ENCODE measurements at regions of chr6 and their contacts with region 1.

Region 1: GRCh38 chr6:79672631-79673111 is 41.5 kb downstream of the SH3BGRL2 start:
- DNase-seq: peak in 1 of 2 experiments; percentile 72
- H3K4me3 ChIP-seq: no peak overlapping the region
- H3K4me3 Mint-ChIP-seq: peak overlapping the region; percentile 79
- H3K27ac Mint-ChIP-seq: peak overlapping the region; percentile 83
- H3K4me1 ChIP-seq: peaks cover 76% of the 10 kb centered on the region
- H3K4me1 Mint-ChIP-seq: peaks cover 71% of the 10 kb centered on the region
- H3K27me3 ChIP-seq: no peaks in the 10 kb centered on the region
- H3K27me3 Mint-ChIP-seq: no peaks in the 10 kb centered on the region
- CTCF ChIP-seq: peak; percentile 41 to 75

Region 2: DNA sequence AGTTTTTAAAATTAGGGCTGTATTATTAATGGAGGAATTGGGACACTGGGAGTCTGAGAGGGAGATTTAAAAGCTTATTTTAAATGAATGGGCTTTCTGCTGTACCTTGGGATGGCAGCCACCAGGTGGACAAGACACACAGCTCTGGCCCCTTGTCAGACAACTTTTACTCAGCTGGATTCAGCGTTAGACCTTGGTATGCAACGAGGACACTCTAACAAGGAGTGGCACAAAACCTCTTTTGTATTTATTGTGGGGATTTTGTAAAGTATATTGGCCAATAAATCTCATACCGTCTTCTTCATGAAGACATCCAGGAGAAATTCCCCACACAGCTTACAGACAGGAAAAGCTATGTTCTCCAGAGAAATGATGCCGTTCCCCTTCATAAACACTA is 241.1 kb before region 1 on chr6:
- CTCF ChIA-PET with region 1: no interaction called
- POLR2A ChIA-PET with region 1: no interaction called
- intact Hi-C with region 1: loop called (anchors 1 kb)
- DNase-seq: peak; percentile 61 to 69
- H3K4me3 ChIP-seq: no peak overlapping the region
- H3K4me3 Mint-ChIP-seq: peak overlapping the region; percentile 10
- H3K27ac Mint-ChIP-seq: peak overlapping the region; percentile 41
- H3K4me1 ChIP-seq: peaks cover 37% of the 10 kb centered on the region
- H3K4me1 Mint-ChIP-seq: peaks cover 24% of the 10 kb centered on the region
- H3K27me3 ChIP-seq: no peaks in the 10 kb centered on the region
- H3K27me3 Mint-ChIP-seq: no peaks in the 10 kb centered on the region
- CTCF ChIP-seq: peak; percentile 62 to 67

Region 3: DNA sequence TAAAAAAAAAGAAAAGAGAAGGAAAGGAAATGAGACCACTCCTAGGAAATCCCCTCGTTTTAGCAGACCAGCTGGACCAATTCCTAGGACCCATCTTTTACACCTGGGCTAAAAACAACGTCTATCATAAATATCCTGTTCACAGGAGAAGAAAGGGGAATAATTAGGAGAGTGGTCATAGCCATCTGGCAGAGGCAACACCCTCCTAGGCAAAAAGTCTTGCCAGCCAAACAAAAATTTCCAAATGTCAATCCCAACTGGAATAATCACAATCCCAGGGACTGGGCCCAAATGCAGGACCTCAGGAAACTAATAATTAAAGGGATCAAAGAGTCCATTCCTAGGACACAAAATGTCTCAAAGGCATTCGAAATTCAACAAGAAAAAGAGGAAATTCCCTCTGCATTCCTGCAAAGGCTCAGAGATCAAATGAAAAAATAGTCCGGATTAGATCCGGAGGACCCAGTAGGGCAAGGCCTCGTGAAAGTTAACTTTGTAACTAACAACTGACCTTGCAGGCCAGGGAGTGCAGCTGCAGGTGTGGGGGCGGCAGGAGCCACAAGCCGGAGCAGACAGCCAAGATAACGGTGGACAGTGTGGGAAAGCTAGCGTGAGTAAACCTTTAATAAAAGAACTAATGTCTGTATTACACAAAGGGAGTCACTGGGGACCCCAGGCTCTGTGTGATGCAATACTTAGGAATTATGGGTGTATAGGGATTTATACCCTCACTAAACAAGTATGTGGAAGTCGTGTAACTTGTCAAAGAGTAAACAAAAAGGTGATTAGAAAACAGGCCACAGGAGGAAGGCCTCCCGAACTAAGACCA is 147.2 kb before region 1 on chr6:
- CTCF ChIA-PET with region 1: no interaction called
- POLR2A ChIA-PET with region 1: no interaction called
- intact Hi-C with region 1: loop called (anchors 1 kb)
- DNase-seq: peak; percentile 87 to 93
- H3K4me3 ChIP-seq: peak overlapping the region; percentile 17
- H3K4me3 Mint-ChIP-seq: peak overlapping the region; percentile 68
- H3K27ac Mint-ChIP-seq: peak overlapping the region; percentile 84
- H3K4me1 ChIP-seq: peaks cover 52% of the 10 kb centered on the region
- H3K4me1 Mint-ChIP-seq: peaks cover 32% of the 10 kb centered on the region
- H3K27me3 ChIP-seq: no peaks in the 10 kb centered on the region
- H3K27me3 Mint-ChIP-seq: no peaks in the 10 kb centered on the region
- CTCF ChIP-seq: no peak

Region 4: DNA sequence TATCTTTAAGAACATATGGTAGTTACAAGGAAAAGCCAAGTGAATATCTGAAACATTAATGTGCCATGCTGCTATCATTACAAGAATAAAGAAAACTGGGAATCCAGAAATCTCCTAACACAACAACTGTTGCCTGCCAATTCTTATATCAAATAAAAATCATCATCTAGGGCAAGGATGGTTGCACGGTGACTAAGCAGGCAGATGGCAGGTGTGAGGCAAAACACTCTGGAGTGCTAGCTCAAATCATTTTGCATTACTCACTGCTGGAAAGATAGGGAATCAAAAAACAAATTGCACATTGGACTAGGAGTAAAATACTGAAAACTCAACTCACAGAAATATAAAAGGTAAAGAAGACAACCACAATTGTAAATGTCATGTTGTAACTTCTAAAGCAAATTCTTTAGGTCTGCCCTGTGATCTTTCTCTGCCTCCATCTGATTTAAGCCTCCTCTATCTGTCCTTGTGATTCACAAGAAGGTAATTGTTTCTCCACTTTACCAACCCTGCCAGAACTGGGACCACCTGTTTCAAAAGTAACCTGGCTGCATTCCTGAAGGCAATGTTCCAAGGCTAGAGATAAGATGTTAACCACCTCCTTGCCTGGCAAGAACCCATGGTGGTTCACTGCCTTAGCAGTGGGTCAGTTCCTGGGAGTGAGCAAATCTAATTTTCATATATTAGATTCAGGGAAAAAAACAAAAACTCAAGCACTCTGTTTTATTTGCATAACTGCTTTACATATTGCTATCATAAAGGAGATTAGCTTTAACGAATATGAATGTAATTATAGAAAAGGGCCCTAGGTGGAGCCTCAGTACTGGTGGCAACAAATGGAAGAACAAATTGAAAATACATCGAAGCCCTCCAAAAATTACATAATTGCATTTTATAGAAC is 102.3 kb before region 1 on chr6:
- CTCF ChIA-PET with region 1: interaction called, 9 read pairs
- POLR2A ChIA-PET with region 1: no interaction called
- intact Hi-C with region 1: loop called (anchors 1 kb)
- DNase-seq: peak; percentile 93 to 94
- H3K4me3 ChIP-seq: peak overlapping the region; percentile 16; the same call in 1 of the 2 replicates
- H3K4me3 Mint-ChIP-seq: peak overlapping the region; percentile 46
- H3K27ac Mint-ChIP-seq: peak overlapping the region; percentile 88
- H3K4me1 ChIP-seq: peaks cover 69% of the 10 kb centered on the region
- H3K4me1 Mint-ChIP-seq: peaks cover 42% of the 10 kb centered on the region
- H3K27me3 ChIP-seq: no peaks in the 10 kb centered on the region
- H3K27me3 Mint-ChIP-seq: no peaks in the 10 kb centered on the region
- CTCF ChIP-seq: peak; percentile 42 to 75

Region 5: GRCh38 chr6:79630883-79631692 is 41.6 kb before region 1 on chr6 and contains the start of gene SH3BGRL2:
- CTCF ChIA-PET with region 1: interaction called, 9 read pairs
- POLR2A ChIA-PET with region 1: interaction called, 6 read pairs
- intact Hi-C with region 1: loop called (anchors 1 kb)
- DNase-seq: peak; percentile 88 to 89
- H3K4me3 ChIP-seq: peak within 1 kb of the TSS; percentile 90
- H3K4me3 Mint-ChIP-seq: peak within 1 kb of the TSS; percentile 95
- H3K27ac Mint-ChIP-seq: peak within 1 kb of the TSS; percentile 94
- H3K4me1 ChIP-seq: peaks cover 32% of the 10 kb centered on the region
- H3K4me1 Mint-ChIP-seq: peaks cover 27% of the 10 kb centered on the region
- H3K27me3 ChIP-seq: no peaks in the 10 kb centered on the region
- H3K27me3 Mint-ChIP-seq: no peaks in the 10 kb centered on the region
- CTCF ChIP-seq: no peak
- total RNA-seq, gene SH3BGRL2: 102 and 106 TPM in 2 replicates

Region 6: DNA sequence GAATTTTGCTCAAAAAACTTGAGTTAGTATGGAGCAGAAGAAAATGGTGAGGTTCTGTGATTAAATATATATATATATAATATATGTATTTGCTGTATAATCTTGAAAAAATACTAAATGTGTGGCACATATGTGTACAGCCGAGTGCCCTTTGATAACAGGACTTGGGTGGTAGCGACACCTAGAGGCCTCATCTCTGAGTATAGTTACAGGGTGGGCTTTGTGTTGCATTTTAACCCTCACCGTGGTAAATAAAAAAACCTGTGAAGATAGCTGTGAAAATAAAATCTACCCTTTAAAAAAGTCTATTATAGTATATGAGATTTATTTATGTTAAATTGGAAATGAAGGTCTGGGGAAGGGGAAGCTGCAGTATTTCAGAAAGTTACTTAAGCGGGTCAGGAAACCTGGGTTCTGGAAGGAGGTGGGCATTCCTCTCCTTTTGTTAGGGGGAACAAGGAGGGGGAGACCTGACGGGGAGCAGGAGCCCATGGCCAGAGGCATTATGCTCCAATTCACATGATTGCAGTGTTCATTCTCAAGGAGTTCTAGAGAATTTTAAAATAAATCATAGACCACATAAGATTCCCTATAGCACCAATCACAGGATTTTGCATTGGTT is 41.1 kb after region 1 on chr6:
- CTCF ChIA-PET with region 1: no interaction called
- POLR2A ChIA-PET with region 1: no interaction called
- intact Hi-C with region 1: loop called (anchors 1 kb)
- DNase-seq: peak; percentile 46 to 67
- H3K4me3 ChIP-seq: no peak overlapping the region
- H3K4me3 Mint-ChIP-seq: no peak overlapping the region
- H3K27ac Mint-ChIP-seq: no peak overlapping the region
- H3K4me1 ChIP-seq: peaks cover 11% of the 10 kb centered on the region
- H3K4me1 Mint-ChIP-seq: peaks cover 24% of the 10 kb centered on the region
- H3K27me3 ChIP-seq: no peaks in the 10 kb centered on the region
- H3K27me3 Mint-ChIP-seq: no peaks in the 10 kb centered on the region
- CTCF ChIP-seq: peak; percentile 72 to 80